Activated CD4-positive, alpha-beta memory T cell treated with anti-CD3 and anti-CD28 coated beads for 36 hours (primary cell): ENCODE measurements at regions of chr18 and their contacts with region 1.

Region 1: DNA sequence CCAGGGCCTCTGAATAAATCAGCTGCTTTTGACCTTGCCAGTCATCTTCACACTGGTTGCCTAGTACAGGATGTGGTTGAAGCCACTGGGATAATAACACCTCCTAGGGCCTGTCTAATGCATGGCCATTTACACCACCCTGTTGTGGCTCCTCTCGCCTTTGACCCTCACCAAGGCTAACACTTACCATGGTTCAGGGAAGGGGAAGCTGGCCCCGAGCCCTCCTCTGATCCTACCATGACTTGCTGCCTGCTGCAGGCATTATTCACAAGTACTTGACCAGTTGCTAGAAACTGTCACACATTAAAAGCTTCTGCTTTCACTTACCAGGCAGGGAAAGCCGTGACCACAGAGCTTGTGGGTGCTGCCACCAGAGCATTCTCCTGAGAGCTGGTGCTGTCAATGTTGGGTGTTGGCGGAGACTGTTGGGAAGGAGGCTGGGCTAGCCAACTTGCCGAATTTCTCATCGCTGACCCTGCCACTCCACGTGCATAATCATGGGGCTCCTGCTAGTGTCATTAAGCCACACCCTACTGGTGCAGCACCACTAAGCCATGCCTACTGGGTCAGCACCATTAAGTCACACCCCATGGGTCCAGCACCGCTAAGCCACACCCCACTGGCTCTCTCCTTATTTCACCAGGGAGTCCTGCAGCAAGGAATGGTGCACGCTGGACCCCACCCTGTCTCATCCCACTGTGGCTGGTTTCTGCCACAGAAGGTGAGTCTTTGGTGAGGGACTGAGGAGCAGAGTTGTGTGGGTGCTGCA is 47.0 kb upstream of the TTC39C start:
- DNase-seq: peak; percentile 63
- H3K4me3 Mint-ChIP-seq: no peak overlapping the region
- H3K27ac Mint-ChIP-seq: no peak overlapping the region
- H3K4me1 Mint-ChIP-seq: peaks cover 82% of the 10 kb centered on the region
- H3K27me3 Mint-ChIP-seq: no peaks in the 10 kb centered on the region

Region 2: GRCh38 chr18:23924813-23925212 is 42.7 kb before region 1 on chr18:
- CTCF ChIA-PET with region 1: interaction called, 10 read pairs
- POLR2A ChIA-PET with region 1: no interaction called
- intact Hi-C with region 1: loop called (anchors 10 kb)
- DNase-seq: no peak
- H3K4me3 Mint-ChIP-seq: no peak overlapping the region
- H3K27ac Mint-ChIP-seq: no peak overlapping the region
- H3K4me1 Mint-ChIP-seq: peaks cover 24% of the 10 kb centered on the region
- H3K27me3 Mint-ChIP-seq: no peaks in the 10 kb centered on the region

Region 3: DNA sequence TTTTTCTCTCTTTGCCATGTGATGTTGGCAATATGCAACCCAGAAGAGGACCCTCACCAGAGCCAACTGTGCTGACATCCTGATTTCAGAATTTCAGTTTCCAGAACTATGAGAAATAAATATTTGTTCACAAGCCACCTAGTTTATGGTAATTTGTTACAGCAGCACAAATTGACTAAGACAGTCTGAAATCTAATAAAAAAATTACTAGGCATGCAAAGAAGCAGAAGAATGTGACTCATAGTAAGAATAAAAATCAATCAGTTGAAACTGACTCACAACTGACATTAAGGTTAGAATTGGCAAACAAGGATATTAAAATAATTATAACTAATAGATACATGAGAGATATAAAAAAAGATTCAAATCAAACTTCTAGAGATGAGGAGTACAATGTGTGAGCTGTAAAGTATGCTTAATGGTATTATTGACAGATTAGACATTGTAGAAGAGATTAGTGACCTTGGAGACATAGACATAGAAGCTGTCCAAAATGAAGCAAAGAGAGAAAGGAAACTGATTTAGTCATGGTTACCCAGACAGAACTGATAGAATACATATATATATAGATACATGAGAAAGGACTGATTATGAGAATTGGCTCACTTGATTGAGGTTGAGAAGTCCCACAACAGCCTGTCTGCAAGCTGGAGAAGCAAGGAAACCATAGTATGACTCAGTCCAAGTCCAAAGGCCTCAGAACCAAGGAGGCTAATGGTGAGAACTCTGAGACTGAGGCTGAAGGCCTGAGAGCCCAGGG is 19.3 kb after region 1 on chr18:
- CTCF ChIA-PET with region 1: interaction called, 3 read pairs
- POLR2A ChIA-PET with region 1: interaction called, 5 read pairs
- intact Hi-C with region 1: loop called (anchors 1 kb)
- DNase-seq: no peak
- H3K4me3 Mint-ChIP-seq: no peak overlapping the region
- H3K27ac Mint-ChIP-seq: peak overlapping the region; percentile 5
- H3K4me1 Mint-ChIP-seq: peaks cover 66% of the 10 kb centered on the region
- H3K27me3 Mint-ChIP-seq: peaks cover 1% of the 10 kb centered on the region

Region 4: DNA sequence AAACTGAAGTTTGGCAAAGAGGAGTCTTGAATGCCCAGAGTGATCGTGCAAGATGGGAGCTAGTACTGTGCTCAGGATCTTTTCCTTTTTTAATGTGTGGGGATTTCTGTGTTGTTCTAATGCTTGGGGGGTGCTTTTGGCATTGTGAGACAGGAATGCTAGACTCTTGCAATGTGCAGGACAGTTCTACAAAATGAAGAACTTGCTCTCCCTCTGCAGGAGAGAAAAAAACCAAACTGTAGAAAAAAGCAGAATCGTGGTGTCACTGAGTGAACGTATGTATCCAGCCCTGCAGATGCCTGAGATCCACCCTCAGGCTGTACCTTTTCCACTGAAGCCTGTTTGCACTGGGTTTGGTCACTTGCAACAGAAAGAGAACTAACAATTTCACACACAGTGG is 35.0 kb after region 1 on chr18:
- CTCF ChIA-PET with region 1: interaction called, 4 read pairs
- POLR2A ChIA-PET with region 1: no interaction called
- intact Hi-C with region 1: loop called (anchors 2 kb)
- DNase-seq: no peak
- H3K4me3 Mint-ChIP-seq: no peak overlapping the region
- H3K27ac Mint-ChIP-seq: no peak overlapping the region
- H3K4me1 Mint-ChIP-seq: peaks cover 77% of the 10 kb centered on the region
- H3K27me3 Mint-ChIP-seq: no peaks in the 10 kb centered on the region

Region 5: DNA sequence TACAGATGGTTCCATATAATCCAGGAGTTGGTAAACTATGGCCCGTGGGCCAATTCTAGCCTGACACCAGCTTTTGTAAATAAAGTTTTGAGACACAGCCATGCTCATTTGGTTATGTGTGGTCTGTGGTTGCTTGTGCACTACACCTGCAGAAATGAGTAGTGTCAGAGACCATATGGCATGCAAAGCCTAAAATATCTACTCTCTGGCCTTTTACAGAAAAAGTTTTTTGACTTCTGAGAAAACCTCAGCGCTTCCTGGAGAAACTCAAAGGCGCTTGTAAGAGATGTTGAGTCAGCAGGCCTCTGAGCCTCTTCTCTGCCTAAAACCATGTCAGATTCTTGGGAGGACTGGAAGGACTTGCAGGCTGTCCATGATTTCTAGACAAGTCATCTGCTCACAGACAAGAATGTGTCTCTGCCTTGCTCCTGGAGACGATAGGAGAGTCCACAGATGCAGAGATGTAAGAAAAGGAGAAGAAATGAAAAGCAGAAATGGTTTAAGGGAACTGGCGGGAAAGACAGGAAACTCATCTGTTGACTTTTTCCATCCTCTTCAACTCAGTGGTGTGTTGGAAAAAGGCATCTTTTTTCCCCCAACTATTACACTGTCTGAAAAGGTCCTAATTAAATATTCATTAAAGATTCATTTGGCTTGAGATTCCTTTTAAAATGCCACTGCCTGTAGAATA is 52.3 kb after region 1 on chr18:
- CTCF ChIA-PET with region 1: interaction called, 4 read pairs
- POLR2A ChIA-PET with region 1: no interaction called
- intact Hi-C with region 1: loop called (anchors 1 kb)
- DNase-seq: peak; percentile 78
- H3K4me3 Mint-ChIP-seq: peak overlapping the region; percentile 75
- H3K27ac Mint-ChIP-seq: peak overlapping the region; percentile 89
- H3K4me1 Mint-ChIP-seq: peaks cover 85% of the 10 kb centered on the region
- H3K27me3 Mint-ChIP-seq: no peaks in the 10 kb centered on the region

Region 6: DNA sequence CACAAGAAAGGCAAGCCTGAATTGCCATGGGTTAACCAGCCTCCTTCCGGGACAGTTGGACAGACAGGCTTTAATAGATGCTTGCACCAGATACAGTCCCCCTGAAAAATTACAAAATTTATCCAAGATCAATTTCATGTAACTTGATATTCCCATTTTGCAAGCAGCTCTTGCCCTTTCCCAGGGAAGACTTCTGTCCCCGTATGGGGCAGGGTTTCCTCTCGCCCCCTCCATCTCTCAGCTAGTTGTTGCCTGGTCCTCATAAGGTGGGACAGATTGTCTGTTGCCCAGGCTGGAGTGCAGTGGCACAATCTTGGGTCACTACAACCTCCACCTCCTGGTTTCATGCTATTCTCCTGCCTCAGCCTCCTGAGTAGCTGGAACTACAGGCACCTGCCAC is 108.2 kb after region 1 on chr18:
- CTCF ChIA-PET with region 1: interaction called, 7 read pairs
- POLR2A ChIA-PET with region 1: no interaction called
- intact Hi-C with region 1: loop called (anchors 1 kb)
- DNase-seq: no peak
- H3K4me3 Mint-ChIP-seq: peak overlapping the region; percentile 14
- H3K27ac Mint-ChIP-seq: peak overlapping the region; percentile 63
- H3K4me1 Mint-ChIP-seq: peaks cover 56% of the 10 kb centered on the region
- H3K27me3 Mint-ChIP-seq: no peaks in the 10 kb centered on the region

Region 7: GRCh38 chr18:24315170-24315569 is 347.7 kb after region 1 on chr18:
- CTCF ChIA-PET with region 1: no interaction called
- POLR2A ChIA-PET with region 1: no interaction called
- intact Hi-C with region 1: no loop called
- DNase-seq: no peak
- H3K4me3 Mint-ChIP-seq: no peak overlapping the region
- H3K27ac Mint-ChIP-seq: no peak overlapping the region
- H3K4me1 Mint-ChIP-seq: peaks cover 5% of the 10 kb centered on the region
- H3K27me3 Mint-ChIP-seq: no peaks in the 10 kb centered on the region